ENCODE measurements at regions of chr10 and their contacts with region 1.

Region 1: DNA sequence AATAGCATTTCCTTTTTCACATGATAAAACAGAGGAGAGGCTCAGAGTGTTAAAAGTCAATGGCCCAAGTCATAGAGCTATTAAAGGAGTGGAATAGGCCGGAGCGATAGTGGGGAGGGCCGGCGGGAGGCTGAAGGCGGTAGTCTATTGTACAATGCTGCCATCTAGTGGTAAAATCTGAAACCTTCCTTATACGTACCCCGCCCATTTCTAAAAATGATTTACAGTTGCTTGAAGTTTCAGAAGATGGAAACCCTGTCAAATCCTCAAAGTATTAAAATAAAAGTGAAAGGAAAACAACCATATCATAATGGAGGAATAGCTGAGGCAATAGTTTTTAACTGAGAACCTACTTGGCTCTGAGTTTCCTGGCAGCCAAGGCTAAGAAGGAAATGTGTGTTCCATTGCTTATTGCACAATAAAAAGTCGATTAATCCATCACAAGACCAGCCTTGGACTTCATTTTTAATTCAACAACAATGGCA is 209.1 kb downstream of the CCSER2 start:
- DNase-seq: peak; percentile 42
- H3K4me3 ChIP-seq: no peak overlapping the region
- H3K27ac ChIP-seq: no peak overlapping the region
- H3K4me1 ChIP-seq: peaks cover 16% of the 10 kb centered on the region
- H3K27me3 ChIP-seq: peaks cover 41% of the 10 kb centered on the region
- CTCF ChIP-seq: peak; percentile 88

Region 2: GRCh38 chr10:84264611-84265141 is 272.8 kb before region 1 on chr10:
- intact Hi-C with region 1: loop called (anchors 5 kb)
- DNase-seq: peak; percentile 50
- H3K4me3 ChIP-seq: no peak overlapping the region
- H3K27ac ChIP-seq: no peak overlapping the region
- H3K4me1 ChIP-seq: peaks cover 9% of the 10 kb centered on the region
- H3K27me3 ChIP-seq: peaks cover 47% of the 10 kb centered on the region
- CTCF ChIP-seq: peak; percentile 97

Region 3: GRCh38 chr10:84397735-84398144 is 139.7 kb before region 1 on chr10:
- intact Hi-C with region 1: no loop called
- DNase-seq: no peak
- H3K4me3 ChIP-seq: no peak overlapping the region
- H3K27ac ChIP-seq: no peak overlapping the region
- H3K4me1 ChIP-seq: peaks cover 24% of the 10 kb centered on the region
- H3K27me3 ChIP-seq: no peaks in the 10 kb centered on the region
- CTCF ChIP-seq: no peak

Region 4: DNA sequence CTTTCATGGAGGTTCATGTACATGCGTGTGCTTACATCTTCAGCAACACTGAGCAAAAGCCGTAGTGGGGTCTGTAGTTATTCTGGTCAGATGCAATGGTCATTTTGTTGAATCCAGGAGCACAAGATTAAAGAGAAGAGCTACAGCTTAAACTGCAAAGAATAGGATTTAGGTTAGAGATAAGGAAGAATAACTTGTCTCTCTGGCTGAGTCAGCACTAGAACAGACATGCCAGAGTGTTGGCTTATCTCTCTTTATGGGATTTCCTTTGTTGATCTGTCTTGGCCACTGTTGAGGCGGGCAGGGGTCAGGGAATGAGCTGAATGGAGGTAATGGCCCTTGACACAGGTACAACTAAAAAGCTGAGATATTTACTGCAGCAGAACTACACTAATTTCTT is 264.4 kb after region 1 on chr10:
- intact Hi-C with region 1: no loop called
- DNase-seq: no peak
- H3K4me3 ChIP-seq: no peak overlapping the region
- H3K27ac ChIP-seq: no peak overlapping the region
- H3K4me1 ChIP-seq: no peaks in the 10 kb centered on the region
- H3K27me3 ChIP-seq: peaks cover 5% of the 10 kb centered on the region
- CTCF ChIP-seq: no peak

Measured in left ventricle myocardium inferior (tissue), 1 donor.